Activated CD8-positive, alpha-beta memory T cell treated with anti-CD3 and anti-CD28 coated beads, Interleukin-2, amount 10 ng/mL, durations not matched to agents 7 days and 5 days (primary cell): ENCODE measurements at regions of chr6 and their contacts with region 1.

Region 1: GRCh38 chr6:125790358-125791150 is at the start of gene NCOA7:
- DNase-seq: peak; percentile 89
- ATAC-seq: peak; percentile 85
- H3K4me3 Mint-ChIP-seq: peak within 1 kb of the TSS; percentile 92
- H3K27ac Mint-ChIP-seq: peak within 1 kb of the TSS; percentile 99
- H3K4me1 Mint-ChIP-seq: peaks cover 54% of the 10 kb centered on the region
- H3K27me3 Mint-ChIP-seq: no peaks in the 10 kb centered on the region
- total RNA-seq, gene NCOA7: 45.3 to 46.9 TPM

Region 2: DNA sequence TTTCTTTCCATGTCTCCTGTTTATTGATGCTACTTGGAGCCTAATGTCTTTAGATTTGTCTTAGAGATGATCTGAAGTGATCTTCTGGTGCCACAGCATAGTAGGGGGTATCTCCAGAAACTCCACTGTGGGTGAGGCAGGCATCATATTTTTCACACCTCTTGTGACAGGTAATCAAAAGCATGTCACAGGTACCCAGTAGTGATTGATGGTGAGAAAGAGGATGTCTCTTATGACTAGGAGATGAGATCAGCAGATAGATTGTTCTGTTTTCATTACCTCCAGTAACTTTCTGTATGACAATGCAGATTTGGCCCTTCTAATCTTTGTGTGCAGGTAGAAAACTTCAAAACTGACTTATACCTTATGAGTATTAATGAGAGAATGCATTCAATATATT is 13.7 kb after region 1 on chr6:
- CTCF ChIA-PET with region 1: interaction called, 13 read pairs
- DNase-seq: no peak
- ATAC-seq: peak; percentile 73
- H3K4me3 Mint-ChIP-seq: no peak overlapping the region
- H3K27ac Mint-ChIP-seq: no peak overlapping the region
- H3K4me1 Mint-ChIP-seq: peaks cover 58% of the 10 kb centered on the region
- H3K27me3 Mint-ChIP-seq: no peaks in the 10 kb centered on the region

Region 3: GRCh38 chr6:125839471-125839870 is 48.9 kb after region 1 on chr6:
- CTCF ChIA-PET with region 1: interaction called, 13 read pairs
- DNase-seq: no peak
- ATAC-seq: no peak
- H3K4me3 Mint-ChIP-seq: no peak overlapping the region
- H3K27ac Mint-ChIP-seq: no peak overlapping the region
- H3K4me1 Mint-ChIP-seq: peaks cover 5% of the 10 kb centered on the region
- H3K27me3 Mint-ChIP-seq: no peaks in the 10 kb centered on the region

Region 4: GRCh38 chr6:125906158-125906998 is 115.8 kb after region 1 on chr6:
- CTCF ChIA-PET with region 1: interaction called, 19 read pairs
- DNase-seq: peak; percentile 54
- ATAC-seq: no peak
- H3K4me3 Mint-ChIP-seq: no peak overlapping the region
- H3K27ac Mint-ChIP-seq: no peak overlapping the region
- H3K4me1 Mint-ChIP-seq: peaks cover 56% of the 10 kb centered on the region
- H3K27me3 Mint-ChIP-seq: no peaks in the 10 kb centered on the region

Region 5: GRCh38 chr6:125956506-125957390 is 166.2 kb after region 1 on chr6 and contains the start of gene HINT3:
- CTCF ChIA-PET with region 1: interaction called, 135 read pairs
- DNase-seq: peak; percentile 98
- ATAC-seq: peak; percentile 93
- H3K4me3 Mint-ChIP-seq: no peak within 1 kb of the TSS
- H3K27ac Mint-ChIP-seq: peak within 1 kb of the TSS; percentile 76
- H3K4me1 Mint-ChIP-seq: peaks cover 10% of the 10 kb centered on the region
- H3K27me3 Mint-ChIP-seq: peaks cover 6% of the 10 kb centered on the region
- total RNA-seq, gene HINT3: 8.7 to 9.3 TPM